Tibial artery (tissue), 4 donors: ENCODE measurements at regions of chr19 and their contacts with region 1.

Region 1: GRCh38 chr19:18063463-18063862 is 23.3 kb downstream of the IL12RB1 start:
- DNase-seq: no peak
- H3K4me3 ChIP-seq: no peak overlapping the region
- H3K27ac ChIP-seq: no peak overlapping the region
- H3K4me1 ChIP-seq: peaks cover 0 to 3% (median 2%) of the 10 kb centered on the region in 4 donors
- H3K27me3 ChIP-seq: peaks cover 0 to 8% of the 10 kb centered on the region in 2 donors
- CTCF ChIP-seq: no peak

Region 2: DNA sequence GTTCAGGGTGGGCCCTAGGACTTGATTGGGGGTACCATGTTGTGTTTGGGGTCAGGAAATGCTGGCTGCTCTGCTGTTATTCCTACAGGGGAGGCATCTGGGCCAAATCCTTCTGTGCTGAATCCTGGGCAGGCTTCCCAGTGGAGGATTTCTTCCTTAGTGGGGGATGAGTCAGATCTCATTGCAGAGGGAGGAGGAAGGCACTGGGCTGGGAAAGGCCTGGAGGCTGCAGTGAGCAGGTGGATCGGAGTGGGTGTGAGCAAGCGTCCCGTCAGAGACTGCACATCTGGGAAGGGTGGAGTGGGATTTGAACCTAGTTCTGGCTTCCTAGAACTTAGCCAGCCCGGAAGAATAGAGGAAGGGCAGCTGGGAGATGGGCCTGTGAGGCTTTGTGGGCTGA is 119.2 kb before region 1 on chr19:
- intact Hi-C with region 1: loop called (anchors 5 kb)
- DNase-seq: no peak
- H3K4me3 ChIP-seq: no peak overlapping the region
- H3K27ac ChIP-seq: no peak overlapping the region
- H3K4me1 ChIP-seq: peaks cover 0 to 23% (median 15%) of the 10 kb centered on the region in 4 donors
- H3K27me3 ChIP-seq: peaks cover 3 to 9% of the 10 kb centered on the region in 2 donors
- CTCF ChIP-seq: no peak

Region 3: DNA sequence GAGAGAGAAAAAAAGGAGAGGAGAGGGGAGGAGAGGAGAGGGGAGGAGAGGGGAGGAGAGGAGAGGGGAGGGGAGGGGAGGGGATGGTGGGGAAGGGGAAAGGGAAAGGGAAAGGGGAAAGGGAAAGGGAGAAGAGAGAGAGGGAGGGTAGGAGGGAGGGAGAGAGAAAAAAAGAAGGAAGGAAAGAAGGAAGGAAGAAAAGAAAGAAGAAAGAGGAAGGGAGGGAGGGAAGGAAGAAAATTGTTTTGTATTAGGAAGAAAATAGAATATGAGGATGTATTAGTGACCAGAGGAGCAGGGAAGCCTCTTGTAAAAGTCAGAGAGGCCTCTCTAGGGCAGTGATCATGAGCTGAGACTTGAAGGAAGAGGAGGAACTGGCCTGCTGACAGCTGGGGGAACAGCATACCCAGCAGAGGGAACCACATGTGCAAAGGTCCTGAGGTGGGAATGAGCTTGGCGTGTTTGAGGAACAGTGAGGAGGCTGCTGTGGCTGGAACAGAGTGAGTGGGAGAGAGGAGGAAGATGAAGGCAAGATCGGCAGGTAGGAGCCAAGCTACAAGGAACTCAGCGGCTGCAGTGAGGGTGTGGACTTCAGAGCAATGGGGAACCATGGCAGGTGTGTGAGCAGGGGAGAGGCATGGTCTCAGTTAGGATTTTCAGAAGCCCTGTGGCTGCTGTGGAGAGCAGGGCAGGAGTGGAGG is 106.2 kb before region 1 on chr19:
- intact Hi-C with region 1: no loop called
- DNase-seq: no peak
- H3K4me3 ChIP-seq: no peak overlapping the region
- H3K27ac ChIP-seq: no peak overlapping the region
- H3K4me1 ChIP-seq: peaks cover 0 to 6% (median 4%) of the 10 kb centered on the region in 4 donors
- H3K27me3 ChIP-seq: peaks cover 0 to 67% of the 10 kb centered on the region in 2 donors
- CTCF ChIP-seq: no peak